ENCODE measurements at regions of chr3 and their contacts with region 1.

Region 1: GRCh38 chr3:193078996-193079753 is 161.5 kb upstream of the MB21D2 start:
- DNase-seq: no peak
- H3K4me3 ChIP-seq: no peak overlapping the region
- H3K27ac ChIP-seq: no peak overlapping the region
- H3K4me1 ChIP-seq: no peaks in the 10 kb centered on the region
- H3K27me3 ChIP-seq: no peaks in the 10 kb centered on the region
- CTCF ChIP-seq: no peak
- POLR2A ChIP-seq: no peak

Region 2: GRCh38 chr3:192501401-192501800 is 577.8 kb before region 1 on chr3:
- CTCF ChIA-PET with region 1: no interaction called
- POLR2A ChIA-PET with region 1: no interaction called
- dilution Hi-C with region 1: no loop called
- intact Hi-C with region 1: no loop called
- DNase-seq: no peak
- H3K4me3 ChIP-seq: no peak overlapping the region
- H3K27ac ChIP-seq: no peak overlapping the region
- H3K4me1 ChIP-seq: no peaks in the 10 kb centered on the region
- H3K27me3 ChIP-seq: peaks cover 2 to 9% of the 10 kb centered on the region in 2 experiments
- CTCF ChIP-seq: no peak
- POLR2A ChIP-seq: no peak

Region 3: DNA sequence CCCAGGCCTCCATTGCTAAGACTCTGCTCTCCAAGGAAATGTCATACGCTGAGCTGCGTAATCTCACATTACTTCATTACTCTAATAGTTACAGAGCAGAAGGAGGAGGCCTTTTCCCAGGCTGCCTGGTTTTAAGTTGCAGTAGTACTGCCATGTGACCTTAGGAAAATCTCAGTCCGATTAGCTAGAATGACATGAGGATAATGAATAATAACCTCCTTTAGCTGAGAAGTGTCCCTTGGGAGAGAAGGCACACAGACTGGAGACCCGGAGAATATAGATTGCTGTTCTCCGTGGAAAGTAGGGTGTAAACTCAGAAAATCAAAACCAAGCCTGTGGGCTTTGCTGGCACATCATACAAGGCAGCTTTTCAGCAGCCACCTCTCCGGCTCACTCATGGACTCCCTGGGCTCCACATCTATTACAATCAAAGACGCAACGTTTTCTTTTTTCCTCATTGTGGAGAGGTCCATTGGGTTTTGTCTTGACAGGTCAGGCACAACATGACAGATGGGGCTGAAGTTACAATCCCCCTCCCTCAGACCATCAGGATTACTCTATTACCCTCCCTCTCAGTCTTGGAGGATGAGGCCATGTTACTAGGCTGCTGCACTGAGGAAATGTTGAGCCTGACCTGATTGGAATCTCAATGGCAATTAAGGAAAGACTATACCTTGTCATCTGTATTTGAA is 26.7 kb before region 1 on chr3:
- CTCF ChIA-PET with region 1: no interaction called
- POLR2A ChIA-PET with region 1: no interaction called
- dilution Hi-C with region 1: no loop called
- intact Hi-C with region 1: loop called (anchors 2 kb)
- DNase-seq: no peak
- H3K4me3 ChIP-seq: no peak overlapping the region
- H3K27ac ChIP-seq: no peak overlapping the region
- H3K4me1 ChIP-seq: no peaks in the 10 kb centered on the region
- H3K27me3 ChIP-seq: no peaks in the 10 kb centered on the region
- CTCF ChIP-seq: no peak
- POLR2A ChIP-seq: no peak

Measured in endothelial cell of umbilical vein (primary cell).